Activated CD4-positive, alpha-beta T cell treated with anti-CD3 and anti-CD28 coated beads, Interleukin-2, amount 10 ng/mL, durations not matched to agents 24 days and 14 days (primary cell): ENCODE measurements at regions of chr14 and their contacts with region 1.

Region 1: GRCh38 chr14:30906752-30907658 is 32.6 kb downstream of the COCH start:
- DNase-seq: no peak
- H3K4me3 Mint-ChIP-seq: no peak overlapping the region
- H3K27ac Mint-ChIP-seq: no peak overlapping the region
- H3K4me1 Mint-ChIP-seq: peaks cover 2% of the 10 kb centered on the region
- H3K27me3 Mint-ChIP-seq: no peaks in the 10 kb centered on the region

Region 2: DNA sequence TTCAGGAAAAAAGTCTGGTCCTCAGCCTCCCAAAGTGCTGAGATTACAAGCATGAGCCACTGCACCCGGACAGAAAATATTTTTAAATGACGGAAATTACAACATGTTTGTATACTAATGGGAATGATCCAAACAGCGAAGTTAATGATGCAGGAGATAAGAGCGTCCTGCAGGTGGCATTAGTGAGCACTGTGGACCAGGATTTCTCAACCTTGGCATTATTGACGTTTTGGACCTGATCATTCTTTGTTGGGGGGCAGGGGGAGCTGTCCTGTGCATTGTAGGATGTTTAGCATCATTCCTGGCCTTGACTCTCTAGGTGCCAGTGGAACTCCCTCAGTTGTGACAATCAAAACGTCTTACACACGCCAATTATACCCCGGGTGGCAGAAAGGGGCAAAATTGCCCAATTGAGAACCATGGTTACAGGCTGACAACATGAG is 250.8 kb before region 1 on chr14:
- intact Hi-C with region 1: loop called (anchors 1 kb)
- DNase-seq: peak; percentile 72
- H3K4me3 Mint-ChIP-seq: no peak overlapping the region
- H3K27ac Mint-ChIP-seq: no peak overlapping the region
- H3K4me1 Mint-ChIP-seq: no peaks in the 10 kb centered on the region
- H3K27me3 Mint-ChIP-seq: no peaks in the 10 kb centered on the region

Region 3: DNA sequence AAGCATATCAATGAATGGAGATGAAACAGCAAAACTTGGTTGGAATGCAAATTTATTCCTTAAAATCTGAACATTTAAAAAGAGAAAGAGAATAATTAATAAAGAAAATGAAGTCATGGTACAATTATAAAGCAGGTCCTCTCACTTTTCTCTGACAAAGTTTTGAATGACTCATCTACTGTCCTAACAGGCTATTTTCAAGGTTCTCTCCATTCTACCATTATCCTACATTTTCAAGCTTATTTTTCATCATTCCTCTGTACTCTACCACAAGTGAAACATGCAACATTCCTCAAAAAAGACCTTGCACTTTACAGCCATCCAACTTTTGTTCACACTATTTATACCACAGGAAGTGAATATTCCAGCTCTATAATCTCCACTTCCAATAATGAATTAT is 81.5 kb after region 1 on chr14:
- intact Hi-C with region 1: no loop called
- DNase-seq: no peak
- H3K4me3 Mint-ChIP-seq: no peak overlapping the region
- H3K27ac Mint-ChIP-seq: no peak overlapping the region
- H3K4me1 Mint-ChIP-seq: peaks cover 7% of the 10 kb centered on the region
- H3K27me3 Mint-ChIP-seq: no peaks in the 10 kb centered on the region